Activated CD4-positive, alpha-beta T cell treated with anti-CD3 and anti-CD28 coated beads, Interleukin-2, amount 10 ng/mL, durations not matched to agents 24 days and 14 days (primary cell): ENCODE measurements at regions of chr12 and their contacts with region 1.

Region 1: GRCh38 chr12:10562306-10562933 is 51.0 kb downstream of the MAGOHB start:
- DNase-seq: peak; percentile 74
- H3K4me3 Mint-ChIP-seq: no peak overlapping the region
- H3K27ac Mint-ChIP-seq: no peak overlapping the region
- H3K4me1 Mint-ChIP-seq: no peaks in the 10 kb centered on the region
- H3K27me3 Mint-ChIP-seq: peaks cover 32% of the 10 kb centered on the region

Region 2: GRCh38 chr12:10153271-10154144 is 408.9 kb before region 1 on chr12:
- intact Hi-C with region 1: loop called (anchors 5 kb)
- DNase-seq: peak; percentile 88
- H3K4me3 Mint-ChIP-seq: peak overlapping the region; percentile 92
- H3K27ac Mint-ChIP-seq: no peak overlapping the region
- H3K4me1 Mint-ChIP-seq: peaks cover 9% of the 10 kb centered on the region
- H3K27me3 Mint-ChIP-seq: peaks cover 47% of the 10 kb centered on the region

Region 3: GRCh38 chr12:10331642-10332239 is 230.7 kb before region 1 on chr12:
- intact Hi-C with region 1: loop called (anchors 2 kb)
- DNase-seq: no peak
- H3K4me3 Mint-ChIP-seq: no peak overlapping the region
- H3K27ac Mint-ChIP-seq: no peak overlapping the region
- H3K4me1 Mint-ChIP-seq: no peaks in the 10 kb centered on the region
- H3K27me3 Mint-ChIP-seq: peaks cover 11% of the 10 kb centered on the region

Region 4: DNA sequence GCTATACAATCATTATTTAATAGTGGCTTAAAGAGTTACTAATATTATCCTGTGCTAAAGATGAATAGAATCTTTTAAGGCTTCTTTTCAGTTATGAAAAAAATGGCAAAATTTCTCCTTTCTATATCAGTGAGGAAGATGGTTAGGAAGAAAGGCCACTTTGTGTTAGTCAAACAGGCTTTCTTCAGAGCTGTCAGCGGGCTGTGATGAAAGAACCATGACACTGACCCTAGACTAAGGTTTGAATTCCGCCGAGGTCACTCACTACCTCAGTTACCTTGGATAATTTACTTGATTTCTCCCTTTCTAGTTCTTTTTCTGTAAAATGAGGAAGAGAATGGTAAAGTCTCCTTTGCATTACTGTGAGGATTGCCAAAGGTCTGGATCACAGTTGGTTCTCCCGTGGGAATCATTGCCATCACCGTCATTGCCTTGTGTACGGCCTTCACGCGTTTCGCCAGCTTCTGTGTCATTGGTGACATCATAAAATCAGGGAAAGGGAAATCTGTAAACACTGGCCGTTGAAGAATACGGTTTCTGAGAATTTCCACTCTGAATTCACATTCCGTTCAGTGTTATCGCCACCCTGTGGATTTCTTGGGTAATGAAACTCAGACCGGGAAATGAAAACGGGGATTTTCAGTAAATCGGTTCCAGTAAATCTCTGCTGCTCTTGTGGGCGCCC is 187.4 kb after region 1 on chr12:
- intact Hi-C with region 1: loop called (anchors 5 kb)
- DNase-seq: peak; percentile 93
- H3K4me3 Mint-ChIP-seq: peak overlapping the region; percentile 66
- H3K27ac Mint-ChIP-seq: no peak overlapping the region
- H3K4me1 Mint-ChIP-seq: peaks cover 17% of the 10 kb centered on the region
- H3K27me3 Mint-ChIP-seq: peaks cover 36% of the 10 kb centered on the region